Left colon (tissue), 2 donors: ENCODE measurements at regions of chr2 and their contacts with region 1.

Region 1: DNA sequence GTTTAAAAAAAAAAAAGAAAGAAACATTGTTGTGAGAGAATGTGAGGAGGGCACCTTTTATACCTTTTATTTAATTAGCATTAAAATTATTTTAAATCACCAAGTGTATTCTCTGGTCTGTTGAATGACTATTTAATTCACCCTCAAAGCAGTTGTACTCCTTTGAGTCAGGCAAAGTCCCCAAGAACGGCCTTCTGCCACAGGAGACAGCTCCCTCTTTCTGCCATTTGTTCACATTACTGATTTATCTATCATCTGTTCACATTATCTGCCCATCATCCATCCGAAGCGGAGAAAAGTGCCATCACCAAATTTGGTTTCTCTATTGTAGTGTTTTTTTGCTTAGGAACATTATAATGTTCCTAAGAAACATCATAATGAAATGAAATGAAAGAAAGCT is 240.7 kb upstream of the DPP10 start:
- DNase-seq: no peak
- ATAC-seq: no peak

Region 2: DNA sequence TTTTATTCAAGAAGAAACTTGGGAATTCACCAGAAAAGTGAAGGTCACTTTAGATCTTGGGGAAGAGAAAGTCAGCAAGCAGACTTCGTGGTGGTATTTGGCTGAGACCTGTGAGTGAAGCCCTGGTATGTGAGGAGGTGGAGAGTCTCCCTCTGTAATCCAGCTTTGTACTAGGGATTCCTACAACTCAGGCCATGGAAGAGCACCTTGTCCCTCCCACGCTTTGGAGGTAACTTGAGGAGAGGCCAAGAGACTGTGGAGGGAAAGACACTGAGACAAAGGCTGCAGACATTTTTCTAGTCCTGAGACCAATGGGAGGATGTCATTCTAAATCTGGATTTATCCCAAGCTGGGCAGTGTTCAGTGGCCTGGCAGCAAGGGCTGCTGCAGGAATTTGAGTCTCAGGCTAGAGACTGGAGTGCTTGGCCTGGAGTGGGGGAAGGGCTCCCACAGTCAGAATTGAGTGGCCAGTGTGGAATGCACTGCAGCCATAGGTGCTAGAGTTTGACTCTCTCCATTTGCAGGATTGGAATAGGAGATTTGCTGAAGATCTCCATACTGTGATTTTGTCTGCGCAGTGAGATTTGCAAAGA is 92.9 kb before region 1 on chr2:
- intact Hi-C with region 1: no loop called
- DNase-seq: no peak
- ATAC-seq: no peak

Region 3: GRCh38 chr2:114237331-114237730 is 35.5 kb after region 1 on chr2:
- intact Hi-C with region 1: no loop called
- DNase-seq: no peak
- ATAC-seq: no peak

Region 4: GRCh38 chr2:114368705-114369104 is 166.9 kb after region 1 on chr2:
- intact Hi-C with region 1: no loop called
- DNase-seq: no peak
- ATAC-seq: no peak

Region 5: DNA sequence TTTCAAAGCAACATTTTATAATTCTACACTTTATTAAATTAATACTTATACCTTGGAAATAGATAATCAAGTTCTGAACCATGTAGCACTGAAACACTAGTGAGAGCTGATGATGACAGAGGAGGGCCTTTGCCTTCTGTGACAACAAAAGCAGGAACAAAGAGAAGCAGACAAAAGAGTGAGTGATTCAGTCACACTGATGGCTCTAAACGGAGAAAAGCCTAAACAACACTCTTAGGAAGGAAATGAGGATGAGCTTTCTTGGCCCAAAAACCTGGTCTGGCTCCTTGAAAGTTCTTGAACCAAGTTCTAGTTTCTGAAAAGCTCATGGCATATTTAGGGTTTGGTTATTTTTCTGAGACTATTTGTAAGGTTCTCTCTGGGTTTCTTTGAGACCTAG is 512.5 kb after region 1 on chr2:
- intact Hi-C with region 1: no loop called
- DNase-seq: no peak
- ATAC-seq: no peak

Region 6: GRCh38 chr2:115596659-115597375 is 1395.0 kb after region 1 on chr2:
- intact Hi-C with region 1: loop called in 1 of 2 experiments (anchors 10 kb)
- DNase-seq: no peak
- ATAC-seq: no peak